Common myeloid progenitor, CD34-positive (primary cell): ENCODE measurements at regions of chr1 and their contacts with region 1.

Region 1: GRCh38 chr1:204363335-204364124 is 3.8 kb upstream of the PLEKHA6 start:
- DNase-seq: peak; percentile 80 to 86 (median 83)
- H3K4me3 ChIP-seq: peak overlapping the region; percentile 20 to 77 (median 54)
- H3K27ac ChIP-seq: no peak overlapping the region
- H3K4me1 ChIP-seq: peaks cover 0 to 59% (median 52%) of the 10 kb centered on the region in 4 experiments
- H3K27me3 ChIP-seq: no peaks in the 10 kb centered on the region

Region 2: GRCh38 chr1:204207136-204207616 is 156.4 kb before region 1 on chr1:
- CTCF ChIA-PET with region 1: interaction called, 25 read pairs
- POLR2A ChIA-PET with region 1: no interaction called
- DNase-seq: peak; percentile 50 to 63 (median 58)
- H3K4me3 ChIP-seq: no peak overlapping the region
- H3K27ac ChIP-seq: no peak overlapping the region
- H3K4me1 ChIP-seq: peaks cover 0 to 6% (median 0%) of the 10 kb centered on the region in 4 experiments
- H3K27me3 ChIP-seq: no peaks in the 10 kb centered on the region

Region 3: DNA sequence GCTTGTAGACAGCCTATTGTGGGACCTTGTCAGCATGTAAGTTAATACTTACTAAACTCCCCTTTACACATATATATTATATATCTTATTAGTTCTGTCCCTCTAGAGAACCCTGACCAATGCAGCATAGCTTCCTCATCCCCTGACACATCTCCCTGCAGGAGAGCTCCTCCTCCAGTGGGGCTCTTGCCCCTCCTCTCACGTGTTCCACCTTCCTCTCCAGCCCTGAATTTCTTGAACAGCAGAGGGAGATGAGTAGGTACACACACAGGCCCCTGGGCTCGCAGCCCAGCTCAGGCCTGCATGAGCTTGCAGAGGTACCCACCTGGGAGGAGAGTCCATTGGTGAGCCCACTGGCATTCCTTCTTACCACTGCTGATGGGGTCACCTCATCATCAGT is 122.5 kb before region 1 on chr1:
- CTCF ChIA-PET with region 1: interaction called, 24 read pairs
- POLR2A ChIA-PET with region 1: no interaction called
- DNase-seq: peak; percentile 42 to 65 (median 46)
- H3K4me3 ChIP-seq: no peak overlapping the region
- H3K27ac ChIP-seq: no peak overlapping the region
- H3K4me1 ChIP-seq: no peaks in the 10 kb centered on the region
- H3K27me3 ChIP-seq: no peaks in the 10 kb centered on the region

Region 4: GRCh38 chr1:204257954-204258752 is 105.4 kb before region 1 on chr1:
- CTCF ChIA-PET with region 1: interaction called, 314 read pairs
- POLR2A ChIA-PET with region 1: interaction called, 16 read pairs
- DNase-seq: peak; percentile 43 to 51 (median 46)
- H3K4me3 ChIP-seq: no peak overlapping the region
- H3K27ac ChIP-seq: no peak overlapping the region
- H3K4me1 ChIP-seq: peaks cover 0 to 14% (median 3%) of the 10 kb centered on the region in 4 experiments
- H3K27me3 ChIP-seq: no peaks in the 10 kb centered on the region

Region 5: DNA sequence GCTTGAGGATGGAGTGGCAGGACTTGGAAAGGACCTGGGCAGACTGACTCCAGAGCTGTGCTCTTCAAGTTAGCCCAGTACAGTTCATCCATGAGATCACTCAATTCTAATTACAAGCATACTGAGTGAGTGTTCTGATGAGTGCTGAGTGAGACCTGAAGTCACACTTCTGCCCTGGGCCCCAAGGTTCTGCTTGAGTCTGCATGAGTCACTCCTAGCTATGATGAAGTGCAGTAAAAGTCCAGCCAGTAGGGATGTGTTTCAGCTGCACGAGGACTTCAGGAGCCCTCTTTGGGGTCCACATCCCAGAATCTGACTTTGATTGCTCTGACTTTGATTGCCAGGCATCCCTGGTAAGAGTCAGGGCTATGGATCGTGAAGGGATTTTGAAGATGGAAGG is 39.6 kb before region 1 on chr1:
- CTCF ChIA-PET with region 1: interaction called, 18 read pairs
- POLR2A ChIA-PET with region 1: no interaction called
- DNase-seq: peak in 2 of 3 donors; percentile 35 to 43
- H3K4me3 ChIP-seq: no peak overlapping the region
- H3K27ac ChIP-seq: no peak overlapping the region
- H3K4me1 ChIP-seq: peaks cover 0 to 22% (median 13%) of the 10 kb centered on the region in 4 experiments
- H3K27me3 ChIP-seq: no peaks in the 10 kb centered on the region

Region 6: DNA sequence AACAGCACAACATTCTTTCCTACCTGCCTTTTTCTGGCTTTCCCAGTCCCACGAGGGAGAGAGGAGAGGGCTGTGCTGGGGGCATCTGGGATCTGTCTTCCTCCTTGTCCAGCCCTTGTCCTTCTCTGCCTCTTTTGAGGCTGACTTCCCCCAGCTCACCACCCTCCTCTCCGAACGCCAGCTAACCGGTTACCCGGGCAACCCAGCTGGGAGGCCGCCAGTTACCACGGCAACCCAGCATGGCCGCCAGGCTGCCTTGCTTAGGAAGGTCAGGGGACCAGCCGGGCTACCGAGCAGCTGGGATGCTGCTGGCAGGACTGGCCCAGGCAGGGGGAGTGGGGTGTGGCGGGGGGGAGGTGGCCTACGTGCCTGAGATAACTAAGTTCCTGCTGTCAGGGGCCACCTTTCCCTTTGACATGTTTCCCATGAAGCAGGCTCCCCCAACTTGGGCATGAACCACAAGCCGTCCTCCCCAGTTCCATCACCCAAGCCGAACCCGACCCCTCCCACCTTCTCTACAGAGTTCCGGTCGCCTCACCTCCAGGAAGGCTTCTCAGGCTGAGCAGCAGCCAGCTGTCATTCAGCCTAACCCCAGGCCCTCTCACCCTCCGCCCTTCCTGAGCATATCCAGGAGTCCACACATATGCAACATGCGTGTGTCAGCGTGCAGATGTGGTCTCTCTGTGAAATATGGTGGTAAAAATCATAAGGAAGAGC is 12.5 kb before region 1 on chr1:
- CTCF ChIA-PET with region 1: interaction called, 55 read pairs
- POLR2A ChIA-PET with region 1: interaction called, 3 read pairs
- DNase-seq: peak in 2 of 3 donors; percentile 78 to 83
- H3K4me3 ChIP-seq: no peak overlapping the region
- H3K27ac ChIP-seq: no peak overlapping the region
- H3K4me1 ChIP-seq: peaks cover 3 to 25% (median 19%) of the 10 kb centered on the region in 4 experiments
- H3K27me3 ChIP-seq: no peaks in the 10 kb centered on the region

Region 7: DNA sequence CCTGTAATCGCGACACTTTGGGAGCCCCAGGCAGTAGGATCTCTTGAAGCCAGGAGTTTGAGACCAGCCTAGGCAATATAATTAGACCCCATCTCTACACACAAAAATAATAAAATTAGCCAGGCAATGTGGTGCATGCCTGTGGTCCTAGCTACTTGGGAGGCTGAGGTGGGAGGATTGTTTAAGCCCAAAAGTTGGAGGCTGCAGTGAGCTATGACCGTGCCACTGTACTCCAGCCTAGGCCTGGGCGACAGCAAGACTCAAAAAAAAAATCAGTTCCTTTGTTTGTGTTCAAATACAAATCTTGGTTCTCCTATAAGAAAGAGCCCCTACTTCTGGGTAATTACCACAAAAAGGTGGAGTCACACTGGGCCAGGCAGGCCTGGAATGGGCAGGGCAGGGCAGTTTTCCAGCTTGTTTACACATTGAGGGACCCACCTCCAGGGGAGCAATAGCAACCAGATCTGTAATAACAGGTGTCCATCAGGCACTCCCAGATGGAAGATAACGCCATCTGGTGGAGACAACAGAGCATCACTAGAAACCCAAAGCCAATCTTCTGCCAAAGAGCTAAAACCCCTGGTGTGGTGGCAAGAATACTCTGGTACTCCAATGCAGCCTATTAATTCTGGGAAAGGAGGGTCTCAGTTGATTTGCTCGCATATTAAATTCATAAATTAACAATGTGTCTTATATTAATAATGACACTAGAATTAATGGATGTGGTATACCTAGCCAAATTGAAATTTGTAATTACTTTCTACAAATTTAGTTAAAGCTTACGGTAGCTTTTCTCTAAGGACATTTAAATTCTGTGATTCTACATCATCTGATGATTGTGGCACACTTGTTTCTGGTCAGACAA is 34.9 kb after region 1 on chr1:
- CTCF ChIA-PET with region 1: interaction called, 24 read pairs
- POLR2A ChIA-PET with region 1: no interaction called
- DNase-seq: peak; percentile 89 to 90 (median 90)
- H3K4me3 ChIP-seq: no peak overlapping the region
- H3K27ac ChIP-seq: no peak overlapping the region
- H3K4me1 ChIP-seq: peaks cover 0 to 2% (median 0%) of the 10 kb centered on the region in 4 experiments
- H3K27me3 ChIP-seq: no peaks in the 10 kb centered on the region